GM10248 (cell line): ENCODE measurements at regions of chr11 and their contacts with region 1.

Region 1: GRCh38 chr11:6251120-6251733 is 8.4 kb upstream of the CCKBR start:
- DNase-seq: peak; percentile 64
- CTCF ChIP-seq: peak; percentile 68

Region 2: GRCh38 chr11:6234387-6235107 is 16.7 kb before region 1 on chr11 and contains the start of gene FHIP1B:
- CTCF ChIA-PET with region 1: interaction called, 45 read pairs
- POLR2A ChIA-PET with region 1: no interaction called
- DNase-seq: peak; percentile 96
- CTCF ChIP-seq: no peak

Region 3: GRCh38 chr11:6268820-6269219 is 17.6 kb after region 1 on chr11:
- CTCF ChIA-PET with region 1: interaction called, 11 read pairs
- POLR2A ChIA-PET with region 1: no interaction called
- DNase-seq: no peak
- CTCF ChIP-seq: no peak

Region 4: DNA sequence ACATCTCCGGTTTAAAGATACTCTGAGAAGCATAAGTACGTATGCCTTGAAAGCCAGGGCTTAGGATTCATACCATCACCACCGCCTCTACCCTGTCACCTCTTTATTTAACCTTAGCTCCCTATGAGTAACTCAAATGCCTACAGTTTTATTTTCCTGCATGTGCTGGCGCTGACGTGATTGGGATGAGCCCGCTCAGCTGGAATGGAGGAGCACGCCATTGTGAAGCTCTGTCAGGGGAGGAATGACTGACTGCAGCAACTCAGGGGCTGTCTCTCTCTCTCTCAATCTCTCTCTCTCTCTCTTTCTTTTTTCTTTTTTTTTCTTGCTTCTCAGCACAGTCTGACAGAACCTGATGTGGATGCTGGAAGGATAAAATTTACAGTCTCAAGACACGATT is 56.6 kb after region 1 on chr11:
- CTCF ChIA-PET with region 1: interaction called, 10 read pairs
- POLR2A ChIA-PET with region 1: no interaction called
- DNase-seq: no peak
- CTCF ChIP-seq: no peak

Region 5: DNA sequence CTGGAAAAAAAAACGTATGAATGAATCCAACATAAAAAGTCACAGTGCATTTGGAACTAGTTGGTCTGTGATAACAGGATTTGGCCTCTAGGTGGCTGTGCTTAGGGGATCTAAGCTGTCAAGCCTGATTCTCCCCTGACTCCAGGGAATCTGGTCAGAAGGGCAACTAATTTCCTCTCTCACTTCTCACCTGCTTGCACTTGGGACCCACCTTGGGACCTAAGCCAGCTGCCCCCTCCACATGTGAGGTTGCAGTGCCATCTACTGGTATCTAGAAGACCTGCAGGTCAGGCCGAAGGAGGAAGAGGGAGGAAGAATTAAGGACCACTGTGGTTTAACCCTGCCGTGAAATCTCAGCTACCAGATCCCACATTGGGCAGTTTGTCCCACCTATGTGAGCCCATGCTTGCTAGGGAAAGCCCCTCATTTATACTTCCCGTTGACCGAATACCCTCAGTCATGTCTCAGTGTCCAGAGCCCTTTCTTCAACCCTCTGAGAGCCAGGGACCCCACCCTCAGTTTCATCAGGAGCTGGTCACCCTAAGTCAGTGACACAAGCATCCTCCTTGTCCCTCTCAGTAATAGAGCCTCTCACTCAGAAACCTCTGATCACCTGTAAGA is 102.2 kb after region 1 on chr11:
- CTCF ChIA-PET with region 1: interaction called, 115 read pairs
- POLR2A ChIA-PET with region 1: no interaction called
- DNase-seq: peak; percentile 67
- CTCF ChIP-seq: peak; percentile 95

Region 6: DNA sequence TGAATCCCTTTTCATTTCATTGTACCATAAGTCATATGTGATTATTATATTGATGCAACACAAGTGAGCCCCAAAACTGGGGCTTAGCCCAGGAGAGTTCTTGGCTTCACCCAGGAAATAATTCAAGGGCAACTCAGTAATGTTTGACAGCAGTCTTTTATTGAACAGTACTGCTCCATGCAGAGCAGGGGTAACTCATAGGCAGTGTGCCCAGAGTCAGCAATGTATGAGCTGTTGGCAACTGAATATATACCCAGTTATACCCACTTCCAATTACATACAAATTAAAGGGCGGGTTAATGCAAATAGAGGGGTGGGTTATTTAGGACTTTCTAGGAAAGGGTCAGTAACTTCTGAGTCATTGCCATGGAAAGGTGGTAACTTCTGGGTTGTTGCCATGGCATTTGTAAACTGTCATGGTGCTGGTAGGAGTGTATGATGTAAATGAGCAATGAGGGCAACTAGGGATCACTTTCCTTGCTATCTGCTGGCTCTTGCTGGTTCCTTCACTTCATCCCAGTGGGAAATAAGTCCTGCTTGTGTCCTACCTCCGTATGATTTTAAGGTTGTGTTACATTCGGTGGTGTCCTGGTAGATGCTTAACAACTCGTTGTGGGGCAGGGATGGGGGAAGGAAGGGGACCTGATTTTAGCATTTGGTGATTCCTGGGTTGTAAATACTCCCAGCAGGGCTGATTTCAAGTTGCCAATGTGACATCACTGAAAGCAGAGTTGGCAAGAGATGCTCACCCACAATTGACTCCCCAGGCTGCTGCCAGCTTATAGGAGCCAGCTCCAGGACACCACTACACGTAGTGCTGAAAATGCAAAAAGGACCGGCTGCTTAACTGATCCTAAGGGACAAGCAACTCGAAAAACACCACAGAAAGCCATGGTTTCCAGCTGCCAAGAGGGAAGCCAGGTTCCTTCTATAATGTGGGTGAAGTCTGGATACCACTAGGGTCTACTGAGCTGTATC is 1070.5 kb after region 1 on chr11:
- CTCF ChIA-PET with region 1: no interaction called
- POLR2A ChIA-PET with region 1: no interaction called
- DNase-seq: no peak
- CTCF ChIP-seq: no peak